Gastrocnemius medialis (tissue), 4 donors: ENCODE measurements at regions of chr10 and their contacts with region 1.

Region 1: DNA sequence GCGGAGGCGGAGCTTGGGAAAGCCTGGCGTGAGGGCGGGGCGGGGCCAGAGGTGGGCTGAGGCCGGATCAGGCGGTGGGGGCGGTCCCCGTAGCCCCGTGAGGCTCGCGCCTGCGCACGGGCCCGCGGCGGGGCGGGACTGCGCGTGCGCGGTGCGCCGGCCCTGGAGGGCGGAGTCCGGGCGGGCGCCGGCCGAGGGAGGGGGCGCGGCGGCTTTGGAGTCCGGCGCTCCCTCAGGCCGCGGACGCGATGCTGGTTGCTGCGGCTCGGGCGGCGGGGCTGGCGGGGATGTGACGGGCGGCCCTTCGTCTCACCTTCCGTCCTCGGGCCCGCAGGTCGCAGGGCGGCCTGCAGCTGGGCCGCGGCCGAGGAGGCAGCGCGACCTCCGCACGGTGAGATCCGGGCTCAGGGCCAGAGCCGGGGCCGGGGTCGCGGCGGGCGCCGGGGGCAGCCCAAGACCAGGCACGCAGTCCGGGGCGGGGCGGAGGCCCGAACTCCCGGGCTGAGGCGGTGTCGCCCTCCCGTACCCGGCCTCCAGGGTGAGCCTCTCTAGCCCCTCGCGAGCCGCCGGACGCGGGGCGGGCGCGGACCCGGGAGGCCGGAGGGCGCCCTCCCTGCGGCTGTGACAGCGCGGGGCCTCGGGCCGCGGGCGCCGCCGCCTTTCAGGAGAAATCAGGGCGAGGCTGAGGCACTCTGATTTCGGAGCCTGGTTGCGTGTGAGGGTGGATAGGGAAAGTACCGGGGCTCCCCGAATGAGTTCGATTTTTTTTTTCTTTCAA is at the start of gene CCSER2:
- DNase-seq: peak; percentile 95 to 97
- ATAC-seq: peak; percentile 90 to 94
- H3K4me3 ChIP-seq: peak within 1 kb of the TSS; percentile 51 to 92 (median 66)
- H3K27ac ChIP-seq: peak within 1 kb of the TSS; percentile 79 to 97 (median 86)
- H3K4me1 ChIP-seq: peaks cover 27 to 35% of the 10 kb centered on the region in 2 donors
- H3K27me3 ChIP-seq: no peaks in the 10 kb centered on the region
- CTCF ChIP-seq: peak in 4 of 5 experiments; percentile 12 to 28 (median 22)
- POLR2A ChIP-seq: peak; percentile 91 to 93
- total RNA-seq, gene CCSER2: 39.8 to 61.8 (median 49.2) TPM

Region 2: DNA sequence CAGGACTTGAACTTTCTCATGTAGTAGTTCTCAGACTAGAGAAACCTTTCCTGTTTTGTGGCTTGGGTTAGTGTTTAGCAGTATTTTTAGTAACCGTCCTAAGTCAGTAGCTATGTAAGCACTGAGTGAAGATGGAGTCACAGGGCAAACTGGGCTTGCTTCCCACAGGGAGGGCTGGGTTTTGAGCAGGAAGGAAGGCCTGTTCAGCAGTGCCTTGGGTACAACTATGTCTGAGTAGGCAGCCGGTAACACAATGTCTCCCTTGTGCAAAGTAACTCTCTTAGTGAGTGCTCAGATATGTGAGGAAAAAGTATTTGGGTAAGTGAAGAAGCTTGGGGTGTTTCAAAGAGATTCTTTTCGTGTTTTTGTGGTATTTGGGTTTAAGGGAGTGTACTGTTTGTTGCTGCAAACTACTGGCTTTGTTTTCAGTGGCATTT is 96.1 kb after region 1 on chr10:
- in situ Hi-C with region 1: no loop called
- intact Hi-C with region 1: loop called (anchors 2 kb)
- DNase-seq: peak; percentile 93 to 96
- ATAC-seq: peak; percentile 100
- H3K4me3 ChIP-seq: peak overlapping the region; percentile 49 to 60 (median 56)
- H3K27ac ChIP-seq: peak overlapping the region; percentile 88 to 93 (median 92)
- H3K4me1 ChIP-seq: peaks cover 32 to 44% of the 10 kb centered on the region in 2 donors
- H3K27me3 ChIP-seq: no peaks in the 10 kb centered on the region
- CTCF ChIP-seq: no peak
- POLR2A ChIP-seq: peak; percentile 65 to 82